CD8-positive, alpha-beta T cell (primary cell): ENCODE measurements at regions of chr3 and their contacts with region 1.

Region 1: GRCh38 chr3:72665701-72666443 is 182.4 kb downstream of the SHQ1 start:
- DNase-seq: peak; percentile 22 to 78 (median 55)
- ATAC-seq: peak; percentile 57
- H3K4me3 ChIP-seq: no peak overlapping the region
- H3K4me3 Mint-ChIP-seq: no peak overlapping the region
- H3K27ac ChIP-seq: no peak overlapping the region
- H3K27ac Mint-ChIP-seq: no peak overlapping the region
- H3K4me1 ChIP-seq: no peaks in the 10 kb centered on the region
- H3K4me1 Mint-ChIP-seq: no peaks in the 10 kb centered on the region
- H3K27me3 ChIP-seq: no peaks in the 10 kb centered on the region
- H3K27me3 Mint-ChIP-seq: no peaks in the 10 kb centered on the region
- CTCF ChIP-seq: peak; percentile 63

Region 2: GRCh38 chr3:71875461-71875947 is 790.4 kb before region 1 on chr3:
- CTCF ChIA-PET with region 1: interaction called, 22 read pairs
- POLR2A ChIA-PET with region 1: no interaction called
- intact Hi-C with region 1: loop called (anchors 2 kb)
- DNase-seq: peak; percentile 60 to 84 (median 71)
- ATAC-seq: peak; percentile 99
- H3K4me3 ChIP-seq: no peak overlapping the region
- H3K4me3 Mint-ChIP-seq: no peak overlapping the region
- H3K27ac ChIP-seq: no peak overlapping the region
- H3K27ac Mint-ChIP-seq: no peak overlapping the region
- H3K4me1 ChIP-seq: no peaks in the 10 kb centered on the region
- H3K4me1 Mint-ChIP-seq: peaks cover 12% of the 10 kb centered on the region
- H3K27me3 ChIP-seq: no peaks in the 10 kb centered on the region
- H3K27me3 Mint-ChIP-seq: peaks cover 3% of the 10 kb centered on the region
- CTCF ChIP-seq: peak; percentile 86

Region 3: GRCh38 chr3:72652395-72652794 is 13.5 kb before region 1 on chr3:
- CTCF ChIA-PET with region 1: interaction called, 14 read pairs
- POLR2A ChIA-PET with region 1: no interaction called
- intact Hi-C with region 1: no loop called
- DNase-seq: no peak
- ATAC-seq: no peak
- H3K4me3 ChIP-seq: no peak overlapping the region
- H3K4me3 Mint-ChIP-seq: no peak overlapping the region
- H3K27ac ChIP-seq: no peak overlapping the region
- H3K27ac Mint-ChIP-seq: no peak overlapping the region
- H3K4me1 ChIP-seq: peaks cover 2% of the 10 kb centered on the region
- H3K4me1 Mint-ChIP-seq: peaks cover 4% of the 10 kb centered on the region
- H3K27me3 ChIP-seq: peaks cover 0 to 2% of the 10 kb centered on the region in 2 experiments
- H3K27me3 Mint-ChIP-seq: peaks cover 2% of the 10 kb centered on the region
- CTCF ChIP-seq: no peak

Region 4: GRCh38 chr3:72756900-72757299 is 91.0 kb after region 1 on chr3:
- CTCF ChIA-PET with region 1: interaction called, 14 read pairs
- POLR2A ChIA-PET with region 1: no interaction called
- intact Hi-C with region 1: no loop called
- DNase-seq: peak in 8 of 9 experiments; percentile 10 to 80 (median 52)
- ATAC-seq: peak; percentile 97
- H3K4me3 ChIP-seq: peak overlapping the region in 1 of 2 experiments; percentile 38
- H3K4me3 Mint-ChIP-seq: peak overlapping the region; percentile 60
- H3K27ac ChIP-seq: peak overlapping the region; percentile 51 to 52
- H3K27ac Mint-ChIP-seq: peak overlapping the region; percentile 93
- H3K4me1 ChIP-seq: peaks cover 44% of the 10 kb centered on the region
- H3K4me1 Mint-ChIP-seq: peaks cover 59% of the 10 kb centered on the region
- H3K27me3 ChIP-seq: no peaks in the 10 kb centered on the region
- H3K27me3 Mint-ChIP-seq: no peaks in the 10 kb centered on the region
- CTCF ChIP-seq: no peak

Region 5: DNA sequence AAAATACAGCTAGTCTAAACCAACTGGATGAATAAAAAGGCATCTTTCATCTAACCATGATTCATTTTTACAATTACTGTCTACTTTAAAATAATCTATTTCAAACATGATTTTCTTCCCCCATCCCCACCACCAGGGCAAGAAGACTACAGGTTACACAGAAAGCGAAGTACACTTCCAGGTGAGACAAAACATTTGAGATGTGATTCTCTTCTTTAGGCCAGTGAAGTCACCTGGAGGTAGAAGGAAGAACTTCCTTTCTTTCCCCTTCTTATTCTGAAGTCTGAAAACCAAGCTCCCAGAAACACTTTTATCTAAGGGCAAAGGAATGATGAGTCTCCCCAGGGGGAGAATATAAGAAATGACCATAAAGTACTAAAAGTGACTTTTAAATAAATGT is 145.7 kb after region 1 on chr3:
- CTCF ChIA-PET with region 1: interaction called, 32 read pairs
- POLR2A ChIA-PET with region 1: no interaction called
- intact Hi-C with region 1: no loop called
- DNase-seq: no peak
- ATAC-seq: no peak
- H3K4me3 ChIP-seq: no peak overlapping the region
- H3K4me3 Mint-ChIP-seq: no peak overlapping the region
- H3K27ac ChIP-seq: no peak overlapping the region
- H3K27ac Mint-ChIP-seq: no peak overlapping the region
- H3K4me1 ChIP-seq: no peaks in the 10 kb centered on the region
- H3K4me1 Mint-ChIP-seq: peaks cover 3% of the 10 kb centered on the region
- H3K27me3 ChIP-seq: no peaks in the 10 kb centered on the region
- H3K27me3 Mint-ChIP-seq: no peaks in the 10 kb centered on the region
- CTCF ChIP-seq: no peak

Region 6: GRCh38 chr3:72938471-72939265 is 272.8 kb after region 1 on chr3:
- CTCF ChIA-PET with region 1: no interaction called
- POLR2A ChIA-PET with region 1: no interaction called
- intact Hi-C with region 1: loop called in 1 of 2 experiments (anchors 10 kb)
- DNase-seq: peak in 5 of 9 experiments; percentile 4 to 70 (median 40)
- ATAC-seq: peak; percentile 100
- H3K4me3 ChIP-seq: no peak overlapping the region
- H3K4me3 Mint-ChIP-seq: no peak overlapping the region
- H3K27ac ChIP-seq: no peak overlapping the region
- H3K27ac Mint-ChIP-seq: no peak overlapping the region
- H3K4me1 ChIP-seq: no peaks in the 10 kb centered on the region
- H3K4me1 Mint-ChIP-seq: no peaks in the 10 kb centered on the region
- H3K27me3 ChIP-seq: no peaks in the 10 kb centered on the region
- H3K27me3 Mint-ChIP-seq: no peaks in the 10 kb centered on the region
- CTCF ChIP-seq: peak; percentile 64

Region 7: GRCh38 chr3:73086071-73086494 is 420.2 kb after region 1 on chr3:
- CTCF ChIA-PET with region 1: no interaction called
- POLR2A ChIA-PET with region 1: no interaction called
- intact Hi-C with region 1: loop called (anchors 1 to 5 kb)
- DNase-seq: peak in 8 of 9 experiments; percentile 15 to 68 (median 56)
- ATAC-seq: peak; percentile 73
- H3K4me3 ChIP-seq: no peak overlapping the region
- H3K4me3 Mint-ChIP-seq: peak overlapping the region; percentile 27
- H3K27ac ChIP-seq: no peak overlapping the region
- H3K27ac Mint-ChIP-seq: peak overlapping the region; percentile 23
- H3K4me1 ChIP-seq: no peaks in the 10 kb centered on the region
- H3K4me1 Mint-ChIP-seq: peaks cover 7% of the 10 kb centered on the region
- H3K27me3 ChIP-seq: no peaks in the 10 kb centered on the region
- H3K27me3 Mint-ChIP-seq: no peaks in the 10 kb centered on the region
- CTCF ChIP-seq: peak; percentile 92